Breast epithelium (tissue), 4 donors: ENCODE measurements at regions of chr19 and their contacts with region 1.

Region 1: DNA sequence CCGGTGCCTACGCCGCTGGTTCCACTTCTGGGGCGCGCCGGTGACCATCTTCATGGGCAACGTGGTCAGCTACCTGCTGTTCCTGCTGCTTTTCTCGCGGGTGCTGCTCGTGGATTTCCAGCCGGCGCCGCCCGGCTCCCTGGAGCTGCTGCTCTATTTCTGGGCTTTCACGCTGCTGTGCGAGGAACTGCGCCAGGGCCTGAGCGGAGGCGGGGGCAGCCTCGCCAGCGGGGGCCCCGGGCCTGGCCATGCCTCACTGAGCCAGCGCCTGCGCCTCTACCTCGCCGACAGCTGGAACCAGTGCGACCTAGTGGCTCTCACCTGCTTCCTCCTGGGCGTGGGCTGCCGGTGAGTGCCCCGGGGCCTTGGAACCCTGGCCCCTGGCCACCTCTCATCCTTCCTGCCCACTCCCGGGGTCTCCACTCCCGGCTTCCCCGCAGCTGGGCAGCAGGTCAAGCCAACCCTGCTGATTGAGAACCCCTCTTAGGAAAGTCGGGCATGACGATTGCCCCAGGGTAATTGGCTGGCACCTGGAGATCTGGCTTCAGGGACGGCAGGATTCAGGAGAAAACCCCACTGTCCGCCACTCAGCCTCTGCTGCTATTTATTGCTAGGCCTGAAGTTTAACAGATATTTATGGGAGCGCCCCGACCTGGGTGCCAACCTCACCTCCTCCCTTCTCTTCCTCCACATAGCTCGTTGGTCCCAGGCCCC is 39.1 kb downstream of the TRPM4 start:
- DNase-seq: peak in 1 of 2 donors; percentile 48
- H3K4me3 ChIP-seq: peak overlapping the region in 2 of 3 donors; percentile 27 to 39
- H3K27ac ChIP-seq: peak overlapping the region; percentile 64 to 66
- H3K4me1 ChIP-seq: no peaks in the 10 kb centered on the region
- H3K27me3 ChIP-seq: no peaks in the 10 kb centered on the region
- CTCF ChIP-seq: no peak
- POLR2A ChIP-seq: no peak

Region 2: GRCh38 chr19:49073514-49074378 is 122.9 kb before region 1 on chr19:
- intact Hi-C with region 1: loop called (anchors 10 kb)
- DNase-seq: no peak
- H3K4me3 ChIP-seq: peak overlapping the region in 1 of 3 donors; percentile 25
- H3K27ac ChIP-seq: no peak overlapping the region
- H3K4me1 ChIP-seq: no peaks in the 10 kb centered on the region
- H3K27me3 ChIP-seq: peaks cover 6 to 35% of the 10 kb centered on the region in 2 donors
- CTCF ChIP-seq: no peak
- POLR2A ChIP-seq: no peak